CD4-positive, alpha-beta T cell (primary cell): ENCODE measurements at regions of chr2 and their contacts with region 1.

Region 1: GRCh38 chr2:189142893-189143759 is 36.4 kb downstream of the COL5A2 start:
- DNase-seq: peak in 13 of 14 experiments; percentile 9 to 76 (median 30)
- ATAC-seq: peak; percentile 94
- H3K4me3 ChIP-seq: no peak overlapping the region
- H3K4me3 Mint-ChIP-seq: no peak overlapping the region
- H3K27ac ChIP-seq: no peak overlapping the region
- H3K27ac Mint-ChIP-seq: no peak overlapping the region
- H3K4me1 ChIP-seq: no peaks in the 10 kb centered on the region
- H3K4me1 Mint-ChIP-seq: no peaks in the 10 kb centered on the region
- H3K27me3 ChIP-seq: no peaks in the 10 kb centered on the region
- H3K27me3 Mint-ChIP-seq: no peaks in the 10 kb centered on the region
- CTCF ChIP-seq: peak; percentile 79

Region 2: GRCh38 chr2:189115126-189115525 is 28.0 kb before region 1 on chr2:
- CTCF ChIA-PET with region 1: no interaction called
- POLR2A ChIA-PET with region 1: no interaction called
- intact Hi-C with region 1: no loop called
- DNase-seq: peak in 1 of 14 experiments; percentile 11
- ATAC-seq: no peak
- H3K4me3 ChIP-seq: no peak overlapping the region
- H3K4me3 Mint-ChIP-seq: no peak overlapping the region
- H3K27ac ChIP-seq: no peak overlapping the region
- H3K27ac Mint-ChIP-seq: no peak overlapping the region
- H3K4me1 ChIP-seq: no peaks in the 10 kb centered on the region
- H3K4me1 Mint-ChIP-seq: no peaks in the 10 kb centered on the region
- H3K27me3 ChIP-seq: no peaks in the 10 kb centered on the region
- H3K27me3 Mint-ChIP-seq: no peaks in the 10 kb centered on the region
- CTCF ChIP-seq: no peak

Region 3: DNA sequence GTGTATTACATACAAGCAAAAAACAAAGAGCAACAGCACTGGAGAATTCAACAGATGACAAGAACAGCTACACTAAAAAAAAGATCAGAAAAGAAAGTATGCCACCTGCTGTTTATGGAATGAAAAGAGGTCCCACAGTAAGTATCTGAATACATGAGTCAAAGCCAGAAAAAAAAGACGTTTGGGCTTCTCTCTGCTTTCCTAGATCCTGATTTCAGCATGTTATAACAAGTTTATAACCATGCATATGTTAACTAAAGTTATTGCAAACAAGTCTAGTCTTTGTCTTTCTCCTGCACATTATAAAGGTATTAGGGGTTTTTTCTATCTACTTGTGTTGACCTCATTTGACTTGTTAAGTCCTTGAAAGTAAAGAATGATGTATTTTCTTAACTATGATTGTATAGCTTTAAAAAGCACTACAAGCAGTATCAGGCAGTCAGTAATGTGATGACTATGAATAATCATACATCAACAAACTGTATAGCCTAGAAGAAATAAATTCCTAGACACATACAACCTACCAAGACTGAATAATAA is 144.9 kb after region 1 on chr2:
- CTCF ChIA-PET with region 1: interaction called, 6 read pairs
- POLR2A ChIA-PET with region 1: no interaction called
- intact Hi-C with region 1: loop called (anchors 2 to 10 kb)
- DNase-seq: peak in 3 of 14 experiments; percentile 37 to 47 (median 47)
- ATAC-seq: peak; percentile 56
- H3K4me3 ChIP-seq: no peak overlapping the region
- H3K4me3 Mint-ChIP-seq: no peak overlapping the region
- H3K27ac ChIP-seq: no peak overlapping the region
- H3K27ac Mint-ChIP-seq: no peak overlapping the region
- H3K4me1 ChIP-seq: no peaks in the 10 kb centered on the region
- H3K4me1 Mint-ChIP-seq: peaks cover 15% of the 10 kb centered on the region
- H3K27me3 ChIP-seq: no peaks in the 10 kb centered on the region
- H3K27me3 Mint-ChIP-seq: no peaks in the 10 kb centered on the region
- CTCF ChIP-seq: peak; percentile 46